CD8-positive, alpha-beta T cell (primary cell): ENCODE measurements at regions of chr1 and their contacts with region 1.

Region 1: GRCh38 chr1:183477986-183478781 is 5.9 kb downstream of the SMG7 start:
- DNase-seq: peak in 1 of 9 experiments; percentile 9
- ATAC-seq: peak; percentile 20
- H3K4me3 ChIP-seq: peak overlapping the region in 1 of 2 experiments; percentile 9
- H3K4me3 Mint-ChIP-seq: peak overlapping the region; percentile 47
- H3K27ac ChIP-seq: peak overlapping the region in 1 of 2 experiments; percentile 26
- H3K27ac Mint-ChIP-seq: peak overlapping the region; percentile 37
- H3K4me1 ChIP-seq: peaks cover 77% of the 10 kb centered on the region
- H3K4me1 Mint-ChIP-seq: peaks cover 63% of the 10 kb centered on the region
- H3K27me3 ChIP-seq: no peaks in the 10 kb centered on the region
- H3K27me3 Mint-ChIP-seq: no peaks in the 10 kb centered on the region
- CTCF ChIP-seq: no peak

Region 2: GRCh38 chr1:183490932-183491331 is 12.7 kb after region 1 on chr1:
- CTCF ChIA-PET with region 1: interaction called, 4 read pairs
- POLR2A ChIA-PET with region 1: interaction called, 3 read pairs
- intact Hi-C with region 1: loop called in 1 of 2 experiments (anchors 2 kb)
- DNase-seq: no peak
- ATAC-seq: no peak
- H3K4me3 ChIP-seq: no peak overlapping the region
- H3K4me3 Mint-ChIP-seq: no peak overlapping the region
- H3K27ac ChIP-seq: no peak overlapping the region
- H3K27ac Mint-ChIP-seq: no peak overlapping the region
- H3K4me1 ChIP-seq: peaks cover 11% of the 10 kb centered on the region
- H3K4me1 Mint-ChIP-seq: peaks cover 68% of the 10 kb centered on the region
- H3K27me3 ChIP-seq: no peaks in the 10 kb centered on the region
- H3K27me3 Mint-ChIP-seq: no peaks in the 10 kb centered on the region
- CTCF ChIP-seq: no peak

Region 3: GRCh38 chr1:183515018-183515689 is 37.0 kb after region 1 on chr1:
- CTCF ChIA-PET with region 1: no interaction called
- POLR2A ChIA-PET with region 1: no interaction called
- intact Hi-C with region 1: loop called (anchors 5 kb)
- DNase-seq: no peak
- ATAC-seq: no peak
- H3K4me3 ChIP-seq: no peak overlapping the region
- H3K4me3 Mint-ChIP-seq: no peak overlapping the region
- H3K27ac ChIP-seq: no peak overlapping the region
- H3K27ac Mint-ChIP-seq: peak overlapping the region; percentile 7
- H3K4me1 ChIP-seq: no peaks in the 10 kb centered on the region
- H3K4me1 Mint-ChIP-seq: peaks cover 16% of the 10 kb centered on the region
- H3K27me3 ChIP-seq: no peaks in the 10 kb centered on the region
- H3K27me3 Mint-ChIP-seq: no peaks in the 10 kb centered on the region
- CTCF ChIP-seq: no peak